Activated CD4-positive, alpha-beta T cell treated with anti-CD3 and anti-CD28 coated beads, Interleukin-2, amount 10 ng/mL, durations not matched to agents 24 days and 14 days (primary cell): ENCODE measurements at regions of chr14 and their contacts with region 1.

Region 1: GRCh38 chr14:65206448-65207096 is 104.3 kb upstream of the MAX start:
- DNase-seq: peak; percentile 78
- H3K4me3 Mint-ChIP-seq: peak overlapping the region; percentile 71
- H3K27ac Mint-ChIP-seq: peak overlapping the region; percentile 90
- H3K4me1 Mint-ChIP-seq: peaks cover 62% of the 10 kb centered on the region
- H3K27me3 Mint-ChIP-seq: no peaks in the 10 kb centered on the region

Region 2: GRCh38 chr14:65102441-65103149 is 104.0 kb before region 1 on chr14 and contains the start of gene MAX:
- intact Hi-C with region 1: loop called (anchors 5 kb)
- DNase-seq: peak; percentile 99
- H3K4me3 Mint-ChIP-seq: peak within 1 kb of the TSS; percentile 91
- H3K27ac Mint-ChIP-seq: peak within 1 kb of the TSS; percentile 94
- H3K4me1 Mint-ChIP-seq: peaks cover 36% of the 10 kb centered on the region
- H3K27me3 Mint-ChIP-seq: peaks cover 7% of the 10 kb centered on the region
- total RNA-seq, gene MAX: 122 and 128 TPM in 2 replicates

Region 3: GRCh38 chr14:65187421-65188049 is 19.0 kb before region 1 on chr14:
- intact Hi-C with region 1: no loop called
- DNase-seq: no peak
- H3K4me3 Mint-ChIP-seq: no peak overlapping the region
- H3K27ac Mint-ChIP-seq: no peak overlapping the region
- H3K4me1 Mint-ChIP-seq: peaks cover 16% of the 10 kb centered on the region
- H3K27me3 Mint-ChIP-seq: peaks cover 2% of the 10 kb centered on the region

Region 4: DNA sequence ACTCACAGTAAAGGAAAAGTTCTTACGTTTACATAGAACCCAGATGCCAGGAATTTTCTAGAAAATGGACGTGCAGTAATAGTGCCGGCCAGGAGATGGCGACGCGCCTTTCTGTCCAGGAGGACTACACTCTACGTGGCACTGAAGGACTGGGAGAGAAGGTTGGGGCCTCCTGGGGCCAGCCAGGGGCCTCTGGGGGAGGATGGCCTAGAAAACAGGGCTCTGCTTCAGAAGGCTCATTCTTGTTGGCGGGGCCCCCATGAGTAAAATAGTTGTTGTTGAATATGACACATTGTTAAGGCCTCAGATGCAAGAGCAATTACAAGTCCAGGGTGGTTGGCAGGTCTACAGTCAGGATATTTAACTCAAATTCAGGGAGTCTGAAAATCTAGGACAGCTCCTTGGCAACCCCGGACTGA is 15.9 kb after region 1 on chr14:
- intact Hi-C with region 1: loop called (anchors 2 kb)
- DNase-seq: peak; percentile 86
- H3K4me3 Mint-ChIP-seq: no peak overlapping the region
- H3K27ac Mint-ChIP-seq: peak overlapping the region; percentile 2
- H3K4me1 Mint-ChIP-seq: peaks cover 45% of the 10 kb centered on the region
- H3K27me3 Mint-ChIP-seq: no peaks in the 10 kb centered on the region

Region 5: DNA sequence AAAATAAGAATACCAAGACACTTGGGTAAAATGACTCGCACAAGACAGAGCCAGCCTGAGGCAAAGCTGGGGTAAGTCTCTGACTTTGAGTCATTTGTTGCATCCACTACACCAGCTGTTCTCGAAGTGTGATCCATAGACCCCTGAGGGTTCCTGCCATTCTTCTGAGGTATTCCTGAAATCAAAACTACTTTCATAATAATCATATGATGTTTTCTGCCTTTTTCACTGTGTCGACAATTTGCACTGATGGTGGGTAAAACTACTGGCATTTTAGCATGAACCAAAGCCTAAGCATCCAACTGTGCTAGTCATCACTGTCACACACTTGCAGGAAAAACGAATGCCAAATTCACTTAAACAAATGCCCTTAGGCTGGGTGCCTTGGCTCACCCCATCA is 70.5 kb after region 1 on chr14:
- intact Hi-C with region 1: no loop called
- DNase-seq: no peak
- H3K4me3 Mint-ChIP-seq: no peak overlapping the region
- H3K27ac Mint-ChIP-seq: no peak overlapping the region
- H3K4me1 Mint-ChIP-seq: peaks cover 7% of the 10 kb centered on the region
- H3K27me3 Mint-ChIP-seq: no peaks in the 10 kb centered on the region

Region 6: DNA sequence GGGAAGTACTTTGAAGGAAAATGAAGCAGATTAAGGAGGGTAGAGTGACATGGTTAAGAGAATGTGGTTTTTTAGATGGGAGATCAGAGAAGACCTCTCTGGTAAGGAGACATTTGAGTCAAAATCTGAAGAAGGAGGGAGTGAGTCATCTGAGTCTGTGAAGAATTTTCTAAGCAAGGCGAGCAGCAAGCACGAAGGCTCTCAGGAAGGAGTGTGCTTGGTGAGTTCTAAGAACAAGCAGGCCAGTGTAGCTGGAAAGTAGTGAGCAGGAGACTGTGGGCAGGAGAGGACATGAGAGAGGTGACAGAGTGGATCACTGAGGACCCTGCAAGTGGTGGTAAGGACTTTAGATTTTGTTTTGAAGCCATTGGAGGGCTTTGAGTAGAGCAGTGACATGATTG is 129.6 kb after region 1 on chr14:
- intact Hi-C with region 1: loop called (anchors 2 kb)
- DNase-seq: peak; percentile 88
- H3K4me3 Mint-ChIP-seq: peak overlapping the region; percentile 90
- H3K27ac Mint-ChIP-seq: peak overlapping the region; percentile 98
- H3K4me1 Mint-ChIP-seq: peaks cover 55% of the 10 kb centered on the region
- H3K27me3 Mint-ChIP-seq: no peaks in the 10 kb centered on the region

Region 7: GRCh38 chr14:65478596-65478995 is 272.0 kb after region 1 on chr14:
- intact Hi-C with region 1: loop called (anchors 10 kb)
- DNase-seq: no peak
- H3K4me3 Mint-ChIP-seq: no peak overlapping the region
- H3K27ac Mint-ChIP-seq: peak overlapping the region; percentile 13
- H3K4me1 Mint-ChIP-seq: peaks cover 53% of the 10 kb centered on the region
- H3K27me3 Mint-ChIP-seq: no peaks in the 10 kb centered on the region

Region 8: GRCh38 chr14:65927931-65928356 is 721.4 kb after region 1 on chr14:
- intact Hi-C with region 1: loop called (anchors 2 kb)
- DNase-seq: peak; percentile 95
- H3K4me3 Mint-ChIP-seq: peak overlapping the region; percentile 58
- H3K27ac Mint-ChIP-seq: peak overlapping the region; percentile 91
- H3K4me1 Mint-ChIP-seq: peaks cover 60% of the 10 kb centered on the region
- H3K27me3 Mint-ChIP-seq: no peaks in the 10 kb centered on the region